IMR-90 (cell line): ENCODE measurements at regions of chr12 and their contacts with region 1.

Region 1: DNA sequence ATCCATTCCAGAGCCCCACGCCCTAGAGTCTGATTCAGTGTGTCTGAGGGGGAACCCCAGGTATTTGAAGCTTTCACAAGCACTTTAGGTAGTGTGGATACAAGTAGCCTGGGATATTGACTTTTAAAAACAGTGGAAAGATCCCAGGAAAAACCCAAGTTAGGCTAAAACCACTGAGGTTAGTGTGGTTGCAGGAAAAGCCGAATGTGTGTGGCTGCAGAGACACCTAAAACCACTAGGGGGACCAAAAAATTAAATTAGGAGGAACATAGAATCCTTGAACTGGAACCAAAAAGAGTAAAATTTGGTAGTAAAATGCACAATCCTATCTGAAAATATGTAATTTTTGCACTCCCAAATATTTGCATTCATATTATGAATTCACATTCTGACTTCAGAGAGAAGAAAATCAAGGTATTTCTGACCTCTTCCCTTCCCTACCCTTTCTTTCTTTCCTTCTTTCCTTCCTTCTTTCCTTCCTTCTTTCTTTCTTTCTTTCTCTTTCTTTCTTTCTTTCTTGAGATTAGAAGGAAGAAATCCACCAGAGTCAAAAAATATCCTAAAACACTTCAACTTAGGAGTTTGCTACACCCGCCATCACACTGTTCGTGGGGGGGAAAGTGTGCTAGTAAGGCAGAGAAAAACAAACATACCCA is 37.8 kb downstream of the SLCO1A2 start:
- DNase-seq: peak; percentile 2
- ATAC-seq: peak; percentile 72
- H3K4me3 ChIP-seq: no peak overlapping the region
- H3K27ac ChIP-seq: no peak overlapping the region
- H3K4me1 ChIP-seq: no peaks in the 10 kb centered on the region
- H3K27me3 ChIP-seq: no peaks in the 10 kb centered on the region
- CTCF ChIP-seq: peak; percentile 55
- POLR2A ChIP-seq: no peak
- RAD21 ChIP-seq: 0 out of 2 replicates have a peak, but pooled peaks have one; percentile 32

Region 2: DNA sequence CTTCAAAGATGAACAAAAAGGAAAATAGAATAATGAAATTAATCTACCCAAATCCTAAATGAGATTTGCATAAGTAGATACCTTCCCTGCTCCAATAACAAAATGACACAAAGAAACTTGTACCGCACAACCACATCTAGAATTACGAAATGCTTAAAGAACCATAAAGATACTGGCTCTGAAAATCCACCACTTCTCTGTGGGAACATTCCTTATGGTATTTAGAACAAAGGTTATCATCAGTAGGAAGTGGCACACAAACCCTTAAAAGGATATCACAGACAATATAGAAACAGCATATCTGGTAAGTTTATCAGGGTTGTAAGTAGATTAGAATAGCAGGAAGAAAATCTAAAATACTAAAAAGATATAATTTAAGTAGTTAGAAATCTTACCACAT is 87.4 kb after region 1 on chr12:
- CTCF ChIA-PET with region 1: no interaction called
- POLR2A ChIA-PET with region 1: no interaction called
- dilution Hi-C with region 1: no loop called
- in situ Hi-C with region 1: no loop called
- intact Hi-C with region 1: no loop called
- DNase-seq: no peak
- ATAC-seq: no peak
- H3K4me3 ChIP-seq: no peak overlapping the region
- H3K27ac ChIP-seq: no peak overlapping the region
- H3K4me1 ChIP-seq: no peaks in the 10 kb centered on the region
- H3K27me3 ChIP-seq: no peaks in the 10 kb centered on the region
- CTCF ChIP-seq: no peak
- POLR2A ChIP-seq: no peak
- RAD21 ChIP-seq: no peak

Region 3: GRCh38 chr12:21438643-21439042 is 141.8 kb after region 1 on chr12:
- CTCF ChIA-PET with region 1: interaction called, 3 read pairs
- POLR2A ChIA-PET with region 1: no interaction called
- dilution Hi-C with region 1: no loop called
- in situ Hi-C with region 1: no loop called
- intact Hi-C with region 1: loop called (anchors 5 kb)
- DNase-seq: peak; percentile 12
- ATAC-seq: no peak
- H3K4me3 ChIP-seq: no peak overlapping the region
- H3K27ac ChIP-seq: no peak overlapping the region
- H3K4me1 ChIP-seq: no peaks in the 10 kb centered on the region; the same call in 1 of the 2 replicates
- H3K27me3 ChIP-seq: no peaks in the 10 kb centered on the region; the same call in 1 of the 2 replicates
- CTCF ChIP-seq: no peak
- POLR2A ChIP-seq: no peak
- RAD21 ChIP-seq: no peak